Posterior vena cava (tissue), 2 donors: ENCODE measurements at regions of chr13 and their contacts with region 1.

Region 1: GRCh38 chr13:114226699-114227323 is 7.9 kb upstream of the CDC16 start:
- DNase-seq: peak; percentile 94

Region 2: DNA sequence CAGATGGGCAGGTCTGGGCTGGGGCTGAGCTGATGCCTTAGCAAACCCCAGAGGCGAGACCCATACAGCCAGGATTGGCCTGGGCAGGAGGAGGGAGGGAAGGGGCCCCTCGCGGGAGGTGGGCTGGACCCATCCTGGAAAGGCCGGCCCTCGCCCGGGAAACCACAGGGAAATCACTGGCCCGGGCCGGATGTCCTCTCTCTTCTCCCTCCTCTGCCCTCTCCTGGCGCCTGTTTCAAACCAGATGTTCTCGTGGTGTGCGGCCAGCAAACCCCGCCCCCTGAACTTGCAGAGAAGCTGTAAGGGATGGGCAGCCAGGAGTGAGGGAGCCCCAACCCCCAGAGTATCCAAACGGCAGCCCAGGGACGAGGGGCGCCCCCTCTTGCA is 424.7 kb before region 1 on chr13:
- intact Hi-C with region 1: loop called in 1 of 2 experiments (anchors 5 kb)
- DNase-seq: peak; percentile 87

Region 3: GRCh38 chr13:113951246-113951999 is 275.4 kb before region 1 on chr13:
- intact Hi-C with region 1: loop called (anchors 2 to 5 kb)
- DNase-seq: peak; percentile 97